ENCODE measurements at regions of chr9 and their contacts with region 1.

Region 1: GRCh38 chr9:137223078-137223970 is 1.3 kb upstream of the RNF208 start:
- H3K4me3 Mint-ChIP-seq: peak overlapping the region; percentile 86
- H3K27ac Mint-ChIP-seq: peak overlapping the region; percentile 87
- H3K4me1 Mint-ChIP-seq: peaks cover 31% of the 10 kb centered on the region
- H3K27me3 Mint-ChIP-seq: peaks cover 32% of the 10 kb centered on the region

Region 2: GRCh38 chr9:136949817-136950655 is 273.3 kb before region 1 on chr9:
- intact Hi-C with region 1: no loop called
- H3K4me3 Mint-ChIP-seq: peak overlapping the region; percentile 95
- H3K27ac Mint-ChIP-seq: peak overlapping the region; percentile 92
- H3K4me1 Mint-ChIP-seq: peaks cover 40% of the 10 kb centered on the region
- H3K27me3 Mint-ChIP-seq: peaks cover 4% of the 10 kb centered on the region

Region 3: DNA sequence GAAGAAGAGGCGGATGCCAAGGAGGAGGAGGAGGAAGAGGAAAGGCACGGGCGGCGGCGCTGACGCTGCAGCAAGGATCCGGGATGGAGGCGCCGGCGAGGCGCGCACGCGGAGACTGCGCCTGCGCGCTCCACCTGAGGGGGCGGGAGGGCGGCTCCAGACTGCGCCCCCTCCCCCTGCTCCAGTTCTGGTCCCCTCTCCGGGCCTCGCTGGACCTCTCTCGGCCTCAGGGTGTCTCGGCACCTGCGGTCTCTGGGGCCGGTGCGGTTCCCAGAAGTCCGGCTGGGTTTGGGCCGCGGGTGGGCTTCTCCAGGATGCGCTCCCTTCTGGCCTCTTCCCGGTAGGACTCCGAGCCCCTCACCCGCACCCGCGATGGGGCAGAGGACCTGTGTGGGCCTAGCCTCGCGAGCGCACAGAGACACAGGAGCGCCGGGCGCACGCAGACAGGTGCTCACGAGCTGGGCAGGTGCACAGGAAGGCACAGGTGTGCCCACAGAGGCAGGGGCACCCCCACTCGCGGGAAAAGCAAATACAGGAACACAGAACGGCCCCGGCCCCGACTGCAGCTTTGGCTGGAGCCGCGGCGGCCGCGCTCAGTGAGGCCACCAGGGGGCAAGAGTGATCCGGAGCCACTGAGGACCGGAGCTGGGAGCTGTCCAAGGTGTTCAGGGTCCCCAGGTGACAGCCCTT is 177.1 kb before region 1 on chr9 and contains the start of gene NPDC1:
- intact Hi-C with region 1: loop called (anchors 5 kb)
- H3K4me3 Mint-ChIP-seq: peak within 1 kb of the TSS; percentile 65
- H3K27ac Mint-ChIP-seq: no peak within 1 kb of the TSS
- H3K4me1 Mint-ChIP-seq: peaks cover 21% of the 10 kb centered on the region
- H3K27me3 Mint-ChIP-seq: peaks cover 88% of the 10 kb centered on the region

Region 4: DNA sequence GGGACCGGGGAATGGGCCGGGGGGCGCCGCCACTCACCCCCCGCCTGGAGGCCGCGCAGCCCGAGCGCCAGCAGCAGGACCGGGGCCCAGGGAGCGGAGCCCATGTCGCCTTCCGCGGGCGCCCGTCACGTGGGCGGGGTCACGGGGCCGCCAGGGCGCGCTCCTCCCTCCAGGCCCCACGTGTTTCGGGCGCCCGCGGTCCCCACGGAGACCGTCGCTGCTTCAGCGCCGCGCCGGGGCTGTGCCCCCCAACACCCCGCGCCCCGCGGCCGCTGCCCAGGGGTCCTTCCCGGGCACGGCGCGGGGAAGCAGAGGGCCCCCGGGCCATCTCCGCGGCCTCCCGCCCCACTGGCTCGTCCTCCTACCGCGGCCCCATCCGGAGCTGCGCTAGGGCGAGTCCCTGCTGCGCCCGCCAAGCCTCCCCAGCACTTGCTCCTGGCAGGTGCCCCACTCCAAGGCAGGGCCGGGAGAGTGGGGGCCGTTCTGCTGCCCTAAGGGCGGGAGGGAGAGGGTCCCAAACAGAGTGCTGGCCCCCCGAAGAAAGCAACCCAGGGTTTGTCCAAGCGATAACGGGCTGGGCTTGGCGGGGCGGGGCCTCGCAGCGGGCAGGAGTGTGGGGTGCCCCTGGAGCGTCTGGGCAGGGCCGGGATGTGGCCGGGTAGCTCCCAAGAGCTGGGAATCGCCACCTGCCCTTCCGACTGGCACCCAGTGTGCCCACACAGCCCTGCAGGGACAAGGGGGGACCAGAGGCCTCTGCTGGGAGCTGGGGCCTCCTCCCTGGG is 108.5 kb before region 1 on chr9 and contains the start of gene DPP7:
- intact Hi-C with region 1: loop called (anchors 2 kb)
- H3K4me3 Mint-ChIP-seq: peak within 1 kb of the TSS; percentile 69
- H3K27ac Mint-ChIP-seq: peak within 1 kb of the TSS; percentile 46
- H3K4me1 Mint-ChIP-seq: peaks cover 19% of the 10 kb centered on the region
- H3K27me3 Mint-ChIP-seq: peaks cover 15% of the 10 kb centered on the region

Region 5: GRCh38 chr9:137188490-137189296 is 34.6 kb before region 1 on chr9 and contains the starts of genes ANAPC2 and SSNA1:
- intact Hi-C with region 1: loop called (anchors 5 kb)
- H3K4me3 Mint-ChIP-seq: peak within 1 kb of the TSS; percentile 96
- H3K27ac Mint-ChIP-seq: peak within 1 kb of the TSS; percentile 90
- H3K4me1 Mint-ChIP-seq: peaks cover 63% of the 10 kb centered on the region
- H3K27me3 Mint-ChIP-seq: no peaks in the 10 kb centered on the region

Region 6: GRCh38 chr9:137205126-137206069 is 17.9 kb before region 1 on chr9 and contains the starts of genes NDOR1 and TMEM203:
- intact Hi-C with region 1: loop called (anchors 2 kb)
- H3K4me3 Mint-ChIP-seq: peak within 1 kb of the TSS; percentile 97
- H3K27ac Mint-ChIP-seq: peak within 1 kb of the TSS; percentile 96
- H3K4me1 Mint-ChIP-seq: peaks cover 57% of the 10 kb centered on the region
- H3K27me3 Mint-ChIP-seq: no peaks in the 10 kb centered on the region

Measured in dendritic cell treated with granulocyte-macrophage colony-stimulating factor and Interleukin-4, amounts not matched to agents 40 ng/mL and 50 ng/mL, for 4 days (primary cell).